SK-N-SH (cell line): ENCODE measurements at regions of chr18 and their contacts with region 1.

Region 1: GRCh38 chr18:50429207-50429948 is 54.5 kb downstream of the SKA1 start:
- DNase-seq: peak; percentile 37
- H3K4me3 ChIP-seq: no peak overlapping the region
- H3K27ac ChIP-seq: no peak overlapping the region
- H3K4me1 ChIP-seq: no peaks in the 10 kb centered on the region
- H3K27me3 ChIP-seq: no peaks in the 10 kb centered on the region
- CTCF ChIP-seq: peak; percentile 57
- EP300 ChIP-seq: no peak
- RAD21 ChIP-seq: peak; percentile 59

Region 2: GRCh38 chr18:50315100-50315871 is 114.1 kb before region 1 on chr18:
- CTCF ChIA-PET with region 1: no interaction called
- POLR2A ChIA-PET with region 1: no interaction called
- DNase-seq: no peak
- H3K4me3 ChIP-seq: no peak overlapping the region
- H3K27ac ChIP-seq: no peak overlapping the region
- H3K4me1 ChIP-seq: no peaks in the 10 kb centered on the region
- H3K27me3 ChIP-seq: no peaks in the 10 kb centered on the region
- CTCF ChIP-seq: no peak
- EP300 ChIP-seq: no peak
- RAD21 ChIP-seq: no peak

Region 3: GRCh38 chr18:50388988-50389387 is 40.4 kb before region 1 on chr18:
- CTCF ChIA-PET with region 1: interaction called, 14 read pairs
- POLR2A ChIA-PET with region 1: no interaction called
- DNase-seq: no peak
- H3K4me3 ChIP-seq: no peak overlapping the region
- H3K27ac ChIP-seq: no peak overlapping the region
- H3K4me1 ChIP-seq: no peaks in the 10 kb centered on the region
- H3K27me3 ChIP-seq: no peaks in the 10 kb centered on the region
- CTCF ChIP-seq: no peak
- EP300 ChIP-seq: no peak
- RAD21 ChIP-seq: no peak

Region 4: GRCh38 chr18:50441518-50441917 is 12.1 kb after region 1 on chr18:
- CTCF ChIA-PET with region 1: interaction called, 18 read pairs
- POLR2A ChIA-PET with region 1: no interaction called
- DNase-seq: no peak
- H3K4me3 ChIP-seq: no peak overlapping the region
- H3K27ac ChIP-seq: no peak overlapping the region
- H3K4me1 ChIP-seq: no peaks in the 10 kb centered on the region; a peak in 1 of 4 replicates
- H3K27me3 ChIP-seq: no peaks in the 10 kb centered on the region
- CTCF ChIP-seq: no peak
- EP300 ChIP-seq: no peak
- RAD21 ChIP-seq: no peak

Region 5: DNA sequence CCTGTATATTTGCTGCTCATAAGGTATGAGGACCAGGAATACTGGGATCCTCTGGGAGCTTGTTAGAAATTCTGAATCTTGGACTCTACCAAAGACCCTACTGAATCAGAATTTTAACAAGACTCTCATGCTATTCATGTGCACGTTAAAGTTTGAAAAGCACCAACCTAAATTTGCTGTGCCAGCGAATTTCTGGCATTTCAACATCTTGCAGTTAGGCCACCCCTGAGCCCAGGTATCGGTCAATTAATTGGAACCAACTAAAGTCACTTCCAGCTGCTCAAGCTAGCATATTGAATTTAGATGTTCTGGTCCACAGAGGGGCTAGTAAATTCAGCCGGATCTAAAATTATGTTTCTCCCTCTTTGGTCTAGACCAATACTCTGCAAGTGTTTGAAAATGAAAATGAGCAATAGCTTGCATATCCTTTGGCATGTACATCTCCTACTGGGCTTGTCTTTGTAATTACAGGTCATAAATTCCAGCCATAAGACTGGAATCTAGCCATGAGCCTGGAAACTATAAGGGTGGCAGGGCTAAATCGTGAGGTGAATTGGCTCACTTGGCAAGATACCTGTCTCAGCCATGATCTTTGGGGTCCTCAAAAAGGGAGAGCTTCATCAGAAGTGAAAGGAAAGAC is 17.8 kb after region 1 on chr18:
- CTCF ChIA-PET with region 1: interaction called, 18 read pairs
- POLR2A ChIA-PET with region 1: no interaction called
- DNase-seq: no peak
- H3K4me3 ChIP-seq: no peak overlapping the region
- H3K27ac ChIP-seq: no peak overlapping the region
- H3K4me1 ChIP-seq: peaks cover 0 to 3% of the 10 kb centered on the region in 2 experiments; a peak in 1 of 4 replicates
- H3K27me3 ChIP-seq: no peaks in the 10 kb centered on the region
- CTCF ChIP-seq: no peak
- EP300 ChIP-seq: no peak
- RAD21 ChIP-seq: no peak